Heart right ventricle (tissue), 16 donors: ENCODE measurements at regions of chr19 and their contacts with region 1.

Region 1: GRCh38 chr19:58519355-58520256 is at the start of gene ZBTB45:
- DNase-seq: peak; percentile 88 to 93
- ATAC-seq: peak; percentile 89 to 96 (median 93)
- H3K4me3 ChIP-seq: peak within 1 kb of the TSS; percentile 56 to 98 (median 82)
- H3K27ac ChIP-seq: peak within 1 kb of the TSS; percentile 71 to 98 (median 94)
- H3K4me1 ChIP-seq: peaks cover 11 to 54% (median 39%) of the 10 kb centered on the region in 9 donors
- H3K27me3 ChIP-seq: no peaks in the 10 kb centered on the region
- CTCF ChIP-seq: peak; percentile 42 to 78 (median 59)
- total RNA-seq, gene ZBTB45: 7.7 to 13.3 (median 9.7) TPM

Region 2: GRCh38 chr19:58499021-58499927 is 20.3 kb before region 1 on chr19:
- intact Hi-C with region 1: loop called in 1 of 10 experiments (anchors 1 kb)
- DNase-seq: peak; percentile 99 to 100
- ATAC-seq: peak; percentile 97 to 99 (median 98)
- H3K4me3 ChIP-seq: peak overlapping the region; percentile 47 to 74 (median 62)
- H3K27ac ChIP-seq: peak overlapping the region in 9 of 10 donors; percentile 76 to 92 (median 85)
- H3K4me1 ChIP-seq: peaks cover 2 to 29% (median 18%) of the 10 kb centered on the region in 9 donors
- H3K27me3 ChIP-seq: no peaks in the 10 kb centered on the region
- CTCF ChIP-seq: peak in 7 of 9 donors; percentile 11 to 52 (median 32)

Region 3: GRCh38 chr19:58543826-58544590 is 24.4 kb after region 1 on chr19 and contains the start of gene TRIM28:
- intact Hi-C with region 1: loop called in 3 of 10 experiments (anchors 1 to 2 kb)
- DNase-seq: peak; percentile 98 to 99
- ATAC-seq: peak; percentile 95 to 98 (median 98)
- H3K4me3 ChIP-seq: peak within 1 kb of the TSS; percentile 67 to 97 (median 88)
- H3K27ac ChIP-seq: peak within 1 kb of the TSS; percentile 89 to 99 (median 96)
- H3K4me1 ChIP-seq: peaks cover 14 to 34% (median 29%) of the 10 kb centered on the region in 9 donors
- H3K27me3 ChIP-seq: no peaks in the 10 kb centered on the region
- CTCF ChIP-seq: no peak
- total RNA-seq, gene TRIM28: 121 to 163 (median 150) TPM

Region 4: DNA sequence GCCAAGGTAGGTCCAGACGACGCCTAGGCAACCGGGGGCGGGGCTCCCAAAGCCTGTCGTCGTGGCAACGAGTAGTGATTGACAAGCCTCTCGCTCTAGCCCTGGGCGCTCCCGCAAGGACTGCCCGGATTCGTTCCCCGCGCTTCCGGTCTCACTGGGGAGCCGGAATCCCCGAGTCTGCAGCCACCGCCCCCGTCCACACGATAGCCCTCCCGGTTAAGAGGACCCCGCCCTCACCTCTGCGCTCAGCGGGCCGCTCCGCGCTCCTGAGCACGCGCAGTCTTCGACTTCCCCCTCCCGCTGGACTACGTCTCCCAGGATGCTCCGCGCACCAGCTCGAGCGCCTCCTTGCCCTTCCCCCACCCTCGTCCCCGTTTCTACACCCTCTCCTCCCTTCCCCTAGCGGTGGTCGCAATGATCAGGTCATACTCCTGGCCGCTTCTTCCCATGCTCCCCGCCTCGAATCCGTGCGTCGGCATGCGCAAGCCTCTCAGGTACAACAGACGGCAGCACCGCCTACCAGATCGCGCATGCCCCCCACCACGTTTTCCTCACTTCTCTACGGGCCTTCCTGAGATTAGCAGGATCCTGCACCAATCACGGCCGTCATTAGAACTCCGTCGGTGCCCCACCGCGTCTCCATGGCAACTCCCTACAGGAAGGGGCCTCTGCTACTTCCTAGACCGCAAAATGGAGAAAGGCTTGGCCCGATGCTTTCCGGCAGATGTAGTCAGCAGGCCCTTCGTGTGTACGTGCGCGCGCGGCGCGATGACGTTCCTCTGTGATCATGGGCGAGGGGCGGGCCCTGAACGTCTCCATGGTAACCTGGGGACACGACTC is 53.4 kb after region 1 on chr19 and contains the start of gene MZF1:
- intact Hi-C with region 1: loop called in 1 of 10 experiments (anchors 1 kb)
- DNase-seq: peak; percentile 99 to 100
- ATAC-seq: peak; percentile 77 to 89 (median 84)
- H3K4me3 ChIP-seq: peak within 1 kb of the TSS; percentile 45 to 82 (median 65)
- H3K27ac ChIP-seq: peak within 1 kb of the TSS; percentile 79 to 98 (median 92)
- H3K4me1 ChIP-seq: peaks cover 4 to 36% (median 21%) of the 10 kb centered on the region in 9 donors
- H3K27me3 ChIP-seq: no peaks in the 10 kb centered on the region
- CTCF ChIP-seq: peak in 2 of 9 donors; percentile 16 to 23
- total RNA-seq, gene MZF1: 4.4 to 12.0 (median 8.3) TPM